Psoas muscle (tissue), 8 donors: ENCODE measurements at regions of chr1 and their contacts with region 1.

Region 1: DNA sequence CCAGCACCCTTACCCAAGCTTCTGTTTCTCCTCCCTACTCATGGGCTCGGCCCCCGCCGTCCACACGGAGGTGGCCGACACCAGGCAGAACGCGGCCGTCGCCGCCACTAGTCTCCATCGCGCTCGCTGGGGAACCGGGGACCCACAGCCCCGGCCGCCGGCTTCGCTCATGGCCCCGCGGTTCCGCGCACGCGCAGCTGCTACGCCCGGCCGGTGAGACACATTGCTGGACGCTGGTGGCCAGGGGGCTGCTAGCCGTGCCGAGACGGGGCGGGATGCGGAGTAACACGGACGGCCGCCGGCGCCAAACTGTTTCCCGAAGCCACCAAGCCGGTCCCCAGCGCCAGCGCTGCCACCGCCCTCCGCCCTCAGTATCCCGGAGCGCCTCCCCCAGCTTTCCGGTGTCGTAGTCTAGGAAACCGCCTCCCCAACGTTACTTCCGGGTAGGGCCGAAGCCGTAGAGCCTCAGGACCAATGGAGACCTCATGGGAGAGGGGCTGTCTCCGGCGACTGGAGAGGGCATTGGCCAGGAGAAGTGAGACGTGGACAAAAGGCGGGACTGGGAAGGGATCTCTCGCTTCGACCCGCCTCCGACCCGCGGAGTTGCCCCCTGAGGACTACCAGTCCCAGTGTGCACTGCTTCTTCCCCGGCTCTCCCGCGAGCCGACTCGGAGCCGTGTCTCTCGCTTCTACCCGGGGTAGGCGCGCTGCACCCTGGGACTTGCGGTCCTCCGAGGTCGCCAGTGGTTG is at the start of gene EDEM3:
- DNase-seq: peak; percentile 99
- ATAC-seq: peak; percentile 95 to 98 (median 96)
- H3K4me3 ChIP-seq: peak within 1 kb of the TSS; percentile 95
- H3K27ac ChIP-seq: peak within 1 kb of the TSS; percentile 93
- H3K4me1 ChIP-seq: peaks cover 22% of the 10 kb centered on the region
- H3K27me3 ChIP-seq: no peaks in the 10 kb centered on the region
- CTCF ChIP-seq: no peak
- total RNA-seq, gene EDEM3: 19.2 to 36.4 (median 27.9) TPM

Region 2: DNA sequence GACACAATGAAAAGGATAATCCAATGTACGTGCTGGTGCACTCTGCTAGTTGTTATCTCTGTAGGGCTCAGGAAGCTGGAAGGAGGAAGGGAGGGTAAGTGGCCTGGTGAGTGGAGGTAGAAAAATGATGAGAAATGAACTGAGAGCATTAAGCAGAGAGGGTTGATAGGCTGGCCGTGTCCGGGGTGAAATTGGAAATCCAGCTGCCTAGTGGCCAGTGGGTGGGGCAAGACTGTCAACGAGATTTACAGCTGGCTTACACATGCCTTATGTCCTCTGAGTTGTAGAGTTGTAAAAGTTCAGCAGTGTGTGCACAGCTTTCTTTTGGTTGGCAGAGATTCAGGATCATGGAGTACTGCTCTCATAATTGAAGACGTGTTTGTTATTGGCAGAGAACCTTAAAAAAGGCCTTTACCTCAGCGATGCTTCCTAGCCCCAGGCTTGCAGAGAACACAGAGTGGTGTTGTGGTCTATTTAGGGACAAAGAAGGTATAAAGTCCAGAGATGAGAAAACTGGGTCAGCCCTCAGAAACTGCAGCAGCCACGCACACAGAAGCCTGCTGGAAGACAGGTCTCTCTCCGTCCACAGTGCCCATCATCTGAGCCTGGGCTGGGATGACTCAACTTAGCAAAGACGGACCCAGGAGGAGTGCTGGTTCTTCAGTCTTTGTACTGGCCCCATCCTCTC is 132.4 kb before region 1 on chr1:
- intact Hi-C with region 1: no loop called
- DNase-seq: peak; percentile 71 to 89
- ATAC-seq: peak; percentile 67 to 82 (median 78)
- H3K4me3 ChIP-seq: peak overlapping the region; percentile 12
- H3K27ac ChIP-seq: peak overlapping the region; percentile 73
- H3K4me1 ChIP-seq: peaks cover 72% of the 10 kb centered on the region
- H3K27me3 ChIP-seq: no peaks in the 10 kb centered on the region
- CTCF ChIP-seq: no peak

Region 3: GRCh38 chr1:184791550-184791900 is 36.9 kb after region 1 on chr1:
- intact Hi-C with region 1: loop called in 1 of 2 experiments (anchors 2 kb)
- DNase-seq: no peak
- ATAC-seq: no peak
- H3K4me3 ChIP-seq: no peak overlapping the region
- H3K27ac ChIP-seq: peak overlapping the region; percentile 96
- H3K4me1 ChIP-seq: peaks cover 27% of the 10 kb centered on the region
- H3K27me3 ChIP-seq: no peaks in the 10 kb centered on the region
- CTCF ChIP-seq: no peak